ENCODE measurements at regions of chr2 and their contacts with region 1.

Region 1: DNA sequence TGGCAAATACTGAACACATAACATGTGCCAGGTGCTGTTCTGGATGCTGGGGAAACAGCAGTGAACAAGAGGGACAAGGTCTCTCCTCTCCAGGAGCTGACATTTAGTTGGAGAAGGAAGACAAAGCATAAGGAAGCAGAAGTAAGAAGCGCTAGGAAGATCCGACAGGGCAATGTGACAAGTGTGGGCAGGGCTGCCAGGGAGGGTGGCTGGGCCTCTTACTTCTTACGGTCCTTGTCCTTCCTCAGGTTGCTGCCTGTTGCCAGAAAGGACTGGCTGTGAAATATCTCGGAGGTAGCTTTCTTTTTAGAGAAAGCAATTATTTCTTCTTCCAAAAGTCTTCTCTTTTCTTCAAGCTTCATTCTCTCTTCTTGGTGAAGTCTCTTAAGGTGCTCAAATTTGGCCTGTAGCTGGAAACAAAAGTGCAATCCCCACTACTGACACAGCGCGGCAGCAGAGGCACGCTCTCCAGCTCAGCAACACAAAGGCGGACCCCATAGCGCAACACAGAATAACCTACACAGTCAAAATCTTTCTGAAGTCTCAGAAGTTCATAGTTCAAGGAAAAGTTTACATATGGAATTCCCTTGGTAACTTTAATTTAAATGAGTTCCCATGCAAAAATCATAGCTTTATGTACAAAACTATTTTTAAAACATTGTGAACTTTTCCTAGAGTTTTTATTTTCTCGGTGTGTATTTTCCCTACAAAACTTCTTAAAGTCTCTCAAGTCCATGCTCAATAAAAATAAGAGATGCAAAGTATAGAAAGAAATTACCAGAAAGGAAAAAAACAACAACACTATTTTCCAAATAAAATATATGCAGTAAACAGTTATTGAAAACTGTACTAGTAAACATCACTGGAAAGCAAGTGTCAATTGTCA is 67.7 kb downstream of the SEPTIN10 start:
- DNase-seq: peak; percentile 63 to 88 (median 83)
- ATAC-seq: peak; percentile 84 to 87
- H3K4me3 ChIP-seq: no peak overlapping the region
- H3K27ac ChIP-seq: no peak overlapping the region
- H3K4me1 ChIP-seq: no peaks in the 10 kb centered on the region
- H3K27me3 ChIP-seq: no peaks in the 10 kb centered on the region

Region 2: DNA sequence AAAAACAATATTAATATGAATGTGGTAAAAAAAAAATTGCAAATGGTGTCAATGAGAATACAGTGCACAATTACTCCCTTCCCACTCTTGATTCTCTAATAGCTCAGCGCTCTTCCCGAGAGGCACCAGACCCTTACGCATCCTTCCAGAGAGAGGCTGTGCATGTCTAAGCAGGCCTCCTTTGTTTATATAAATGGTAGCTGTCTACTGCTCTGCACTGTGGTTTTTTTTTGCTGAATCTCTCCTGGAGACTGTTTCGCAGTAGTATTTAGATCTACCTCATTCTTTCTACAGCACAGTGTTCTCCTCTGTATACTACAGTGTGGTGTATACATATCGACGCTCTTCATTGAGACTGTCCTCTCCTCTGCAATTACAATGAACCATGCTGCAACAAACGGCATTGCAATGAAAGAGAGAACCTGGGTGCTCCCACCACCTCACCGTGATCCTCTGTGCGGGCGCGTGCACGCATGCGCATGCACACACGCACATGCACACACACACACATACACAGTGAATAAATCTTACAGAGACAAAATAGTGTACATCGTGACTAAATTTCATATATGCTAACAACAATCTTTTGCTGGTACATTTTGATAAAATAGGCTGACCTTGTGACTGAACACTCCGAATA is 48.3 kb after region 1 on chr2:
- intact Hi-C with region 1: no loop called
- DNase-seq: no peak
- ATAC-seq: no peak
- H3K4me3 ChIP-seq: no peak overlapping the region
- H3K27ac ChIP-seq: no peak overlapping the region
- H3K4me1 ChIP-seq: no peaks in the 10 kb centered on the region
- H3K27me3 ChIP-seq: no peaks in the 10 kb centered on the region

Region 3: GRCh38 chr2:109613922-109614714 is 68.0 kb after region 1 on chr2 and contains the starts of genes SEPTIN10 and SOWAHC:
- intact Hi-C with region 1: loop called in 1 of 4 experiments (anchors 5 kb)
- DNase-seq: peak; percentile 99
- ATAC-seq: peak; percentile 97 to 98
- H3K4me3 ChIP-seq: peak within 1 kb of the TSS; percentile 79
- H3K27ac ChIP-seq: peak within 1 kb of the TSS; percentile 97
- H3K4me1 ChIP-seq: peaks cover 7% of the 10 kb centered on the region
- H3K27me3 ChIP-seq: no peaks in the 10 kb centered on the region
- total RNA-seq, gene SEPTIN10: 58.8 to 63.0 (median 62.0) TPM
- total RNA-seq, gene SOWAHC: 2.1 to 3.5 (median 3.0) TPM

Region 4: DNA sequence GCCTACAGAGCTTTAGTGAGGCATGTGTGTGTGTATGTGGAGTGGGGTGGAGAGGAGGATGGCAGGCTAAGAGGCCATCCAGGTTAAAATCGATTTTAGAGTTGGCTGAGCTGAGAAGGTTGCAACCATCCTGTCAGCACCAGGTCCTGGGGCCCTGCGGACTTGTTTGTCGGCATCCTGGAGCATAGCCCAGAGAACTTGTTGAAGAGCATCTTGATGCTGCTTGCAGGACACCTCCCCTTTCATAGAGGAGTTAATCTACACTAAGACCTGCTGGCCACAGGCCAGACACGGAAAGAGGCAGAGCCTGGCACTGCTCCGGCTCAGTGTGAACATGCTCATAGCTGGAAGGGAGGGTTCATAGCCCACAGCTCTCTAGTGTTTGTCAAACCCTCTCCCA is 176.0 kb after region 1 on chr2:
- intact Hi-C with region 1: loop called in 2 of 4 experiments (anchors 5 to 10 kb)
- DNase-seq: peak in 2 of 3 donors; percentile 71 to 75
- ATAC-seq: peak; percentile 34 to 73
- H3K4me3 ChIP-seq: no peak overlapping the region
- H3K27ac ChIP-seq: no peak overlapping the region
- H3K4me1 ChIP-seq: no peaks in the 10 kb centered on the region
- H3K27me3 ChIP-seq: no peaks in the 10 kb centered on the region

Region 5: GRCh38 chr2:109736177-109736827 is 190.2 kb after region 1 on chr2:
- intact Hi-C with region 1: loop called in 1 of 4 experiments (anchors 5 kb)
- DNase-seq: peak in 2 of 3 donors; percentile 40 to 68
- ATAC-seq: peak; percentile 68 to 77
- H3K4me3 ChIP-seq: no peak overlapping the region
- H3K27ac ChIP-seq: no peak overlapping the region
- H3K4me1 ChIP-seq: no peaks in the 10 kb centered on the region
- H3K27me3 ChIP-seq: no peaks in the 10 kb centered on the region

Measured in right cardiac atrium (tissue), 5 donors.